ENCODE measurements at regions of chr16 and their contacts with region 1.

Region 1: DNA sequence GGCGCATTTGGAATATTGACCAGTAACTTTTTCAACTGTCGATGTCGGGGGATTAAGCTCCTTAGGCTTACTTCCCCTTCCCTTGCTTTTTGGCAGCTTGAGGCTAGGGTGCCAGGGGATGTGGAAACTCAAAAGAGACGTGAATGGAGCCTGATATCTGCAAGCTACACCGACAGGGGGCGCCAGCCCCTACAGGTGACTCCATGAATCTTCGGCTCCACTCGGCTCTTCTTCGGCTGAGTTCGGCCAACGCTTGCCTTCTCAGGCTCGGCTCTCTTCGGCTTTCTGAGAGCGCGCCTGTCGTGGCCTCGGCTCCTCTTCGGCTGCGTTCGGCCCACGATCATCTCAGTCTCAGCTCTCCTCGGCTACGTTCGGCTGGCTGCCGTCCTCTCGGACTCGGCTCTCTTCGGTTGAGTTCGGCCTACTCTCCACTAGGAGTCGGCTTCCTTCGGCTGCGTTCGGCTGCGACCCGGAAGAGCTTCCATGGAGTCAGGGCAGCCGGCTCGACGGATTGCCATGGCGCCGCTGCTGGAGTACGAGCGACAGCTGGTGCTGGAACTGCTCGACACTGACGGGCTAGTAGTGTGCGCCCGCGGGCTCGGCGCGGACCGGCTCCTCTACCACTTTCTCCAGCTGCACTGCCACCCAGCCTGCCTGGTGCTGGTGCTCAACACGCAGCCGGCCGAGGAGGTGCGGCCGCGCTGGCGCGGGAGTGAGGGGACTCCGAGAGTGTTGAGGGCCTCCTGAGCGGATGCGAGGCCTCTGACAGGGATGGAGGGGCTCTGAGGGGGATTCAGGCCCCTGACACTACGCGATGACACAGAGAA is at the start of gene ERCC4:
- DNase-seq: peak; percentile 94
- ATAC-seq: peak; percentile 97
- H3K4me3 Mint-ChIP-seq: peak within 1 kb of the TSS; percentile 92
- H3K27ac Mint-ChIP-seq: peak within 1 kb of the TSS; percentile 88
- H3K4me1 Mint-ChIP-seq: peaks cover 25% of the 10 kb centered on the region
- H3K27me3 Mint-ChIP-seq: no peaks in the 10 kb centered on the region
- CTCF ChIP-seq: peak; percentile 57
- total RNA-seq, gene ERCC4: 10.2 and 10.7 TPM in 2 replicates

Region 2: GRCh38 chr16:12803203-12804097 is 1116.4 kb before region 1 on chr16 and contains the start of gene CPPED1:
- CTCF ChIA-PET with region 1: no interaction called
- POLR2A ChIA-PET with region 1: no interaction called
- intact Hi-C with region 1: loop called (anchors 5 kb)
- DNase-seq: peak; percentile 94
- ATAC-seq: peak; percentile 89
- H3K4me3 Mint-ChIP-seq: peak within 1 kb of the TSS; percentile 93
- H3K27ac Mint-ChIP-seq: peak within 1 kb of the TSS; percentile 89
- H3K4me1 Mint-ChIP-seq: peaks cover 34% of the 10 kb centered on the region
- H3K27me3 Mint-ChIP-seq: no peaks in the 10 kb centered on the region
- CTCF ChIP-seq: no peak
- total RNA-seq, gene CPPED1: 12.2 and 14.1 TPM in 2 replicates

Region 3: GRCh38 chr16:13645591-13646245 is 274.2 kb before region 1 on chr16:
- CTCF ChIA-PET with region 1: no interaction called
- POLR2A ChIA-PET with region 1: no interaction called
- intact Hi-C with region 1: no loop called
- DNase-seq: no peak
- ATAC-seq: no peak
- H3K4me3 Mint-ChIP-seq: no peak overlapping the region
- H3K27ac Mint-ChIP-seq: no peak overlapping the region
- H3K4me1 Mint-ChIP-seq: no peaks in the 10 kb centered on the region
- H3K27me3 Mint-ChIP-seq: peaks cover 3% of the 10 kb centered on the region
- CTCF ChIP-seq: no peak

Region 4: DNA sequence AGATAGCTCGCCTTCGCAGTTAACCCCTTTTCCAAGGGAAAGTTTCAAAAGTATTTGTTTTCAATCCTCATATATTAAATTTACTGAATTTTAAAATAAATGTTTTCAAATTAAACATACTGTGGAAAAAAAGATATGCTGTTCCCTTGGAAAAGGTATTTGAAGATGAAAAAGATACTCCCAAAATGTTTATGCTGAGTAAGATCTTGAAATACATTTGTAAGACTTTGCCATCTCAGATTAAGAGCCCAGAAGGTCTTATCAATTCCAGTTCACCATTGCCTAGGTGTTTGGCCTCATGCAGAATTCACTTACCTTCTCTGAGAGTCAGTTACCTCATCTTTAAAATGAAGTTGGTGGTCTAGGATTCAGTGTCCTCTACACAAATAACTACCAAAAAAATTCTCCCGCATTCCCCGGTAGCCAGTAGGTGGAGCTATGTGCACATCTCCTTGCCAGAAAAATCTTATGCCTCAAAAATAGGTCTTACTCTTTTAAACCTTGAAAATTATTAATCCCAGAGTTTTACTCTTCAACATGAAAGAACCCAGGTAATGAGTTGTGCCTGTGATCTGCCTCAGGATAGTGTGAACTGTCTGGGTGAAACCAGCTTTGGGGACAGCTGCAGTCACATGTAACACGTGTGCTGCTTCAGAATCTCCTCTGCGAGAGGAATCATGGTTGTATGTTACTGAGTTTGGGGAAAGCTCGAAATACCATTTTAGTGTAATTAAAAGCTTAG is 329.6 kb after region 1 on chr16:
- CTCF ChIA-PET with region 1: interaction called, 16 read pairs
- POLR2A ChIA-PET with region 1: no interaction called
- intact Hi-C with region 1: loop called (anchors 1 kb)
- DNase-seq: no peak
- ATAC-seq: no peak
- H3K4me3 Mint-ChIP-seq: no peak overlapping the region
- H3K27ac Mint-ChIP-seq: no peak overlapping the region
- H3K4me1 Mint-ChIP-seq: no peaks in the 10 kb centered on the region
- H3K27me3 Mint-ChIP-seq: no peaks in the 10 kb centered on the region
- CTCF ChIP-seq: peak; percentile 76

Region 5: DNA sequence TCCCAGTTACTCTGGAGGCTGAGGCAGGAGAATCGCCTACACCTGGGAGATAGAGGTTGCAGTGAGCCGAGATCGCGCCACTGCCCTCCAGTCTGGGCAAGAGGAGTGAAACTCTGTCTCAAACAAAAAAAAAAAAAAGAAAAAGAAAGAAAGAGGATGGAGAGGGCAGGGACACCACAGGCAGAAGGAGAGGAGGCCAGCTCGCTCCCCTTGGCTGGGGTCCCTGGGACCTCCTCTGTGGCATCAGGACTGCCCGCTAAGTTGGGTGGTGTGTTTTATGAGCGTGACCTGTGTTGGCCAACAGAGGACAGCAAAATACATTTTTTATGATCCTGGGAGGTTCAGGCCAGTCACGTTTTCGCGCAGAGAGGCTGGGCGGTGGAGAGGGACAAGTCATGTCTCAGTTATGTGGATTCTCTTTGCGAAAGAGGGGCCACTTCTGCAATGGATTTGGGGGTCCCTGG is 380.8 kb after region 1 on chr16:
- CTCF ChIA-PET with region 1: interaction called, 3 read pairs
- POLR2A ChIA-PET with region 1: no interaction called
- intact Hi-C with region 1: loop called (anchors 5 kb)
- DNase-seq: no peak
- ATAC-seq: peak; percentile 60
- H3K4me3 Mint-ChIP-seq: peak overlapping the region; percentile 83
- H3K27ac Mint-ChIP-seq: peak overlapping the region; percentile 61
- H3K4me1 Mint-ChIP-seq: peaks cover 16% of the 10 kb centered on the region
- H3K27me3 Mint-ChIP-seq: peaks cover 14% of the 10 kb centered on the region
- CTCF ChIP-seq: no peak

Region 6: DNA sequence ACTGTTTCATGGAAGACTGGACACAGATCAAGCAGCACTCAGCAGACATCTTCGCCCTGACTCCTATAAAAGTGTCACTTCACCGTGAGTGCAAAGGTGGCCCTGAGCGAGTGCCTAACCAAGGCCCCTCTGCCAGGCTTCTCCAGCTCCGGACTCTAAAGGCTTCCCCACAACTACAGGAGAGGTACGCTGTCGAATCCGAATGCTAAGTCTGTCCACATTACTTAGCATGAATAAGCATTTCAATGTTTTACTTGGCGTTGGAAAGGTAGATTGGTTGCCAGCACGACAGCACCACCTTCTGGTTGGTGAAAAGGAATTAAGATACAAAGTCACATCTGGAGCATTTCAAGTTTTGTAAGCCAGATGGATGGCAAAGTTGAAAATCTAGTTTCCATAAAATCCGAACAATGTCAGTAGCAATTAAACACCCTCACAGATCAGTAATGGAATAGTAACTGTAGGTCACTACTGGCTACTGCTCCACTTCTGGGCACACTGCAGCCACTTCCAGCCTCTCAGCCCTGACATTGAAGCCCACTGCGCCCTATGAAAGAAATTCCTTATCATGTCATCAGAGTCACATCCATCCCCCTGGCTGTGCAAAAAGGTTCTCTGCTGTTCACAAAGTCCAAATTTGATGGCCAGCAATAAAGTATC is 609.2 kb after region 1 on chr16:
- CTCF ChIA-PET with region 1: interaction called, 4 read pairs
- POLR2A ChIA-PET with region 1: no interaction called
- intact Hi-C with region 1: loop called (anchors 1 kb)
- DNase-seq: peak; percentile 24
- ATAC-seq: peak; percentile 65
- H3K4me3 Mint-ChIP-seq: no peak overlapping the region
- H3K27ac Mint-ChIP-seq: no peak overlapping the region
- H3K4me1 Mint-ChIP-seq: peaks cover 5% of the 10 kb centered on the region
- H3K27me3 Mint-ChIP-seq: no peaks in the 10 kb centered on the region
- CTCF ChIP-seq: no peak

Region 7: DNA sequence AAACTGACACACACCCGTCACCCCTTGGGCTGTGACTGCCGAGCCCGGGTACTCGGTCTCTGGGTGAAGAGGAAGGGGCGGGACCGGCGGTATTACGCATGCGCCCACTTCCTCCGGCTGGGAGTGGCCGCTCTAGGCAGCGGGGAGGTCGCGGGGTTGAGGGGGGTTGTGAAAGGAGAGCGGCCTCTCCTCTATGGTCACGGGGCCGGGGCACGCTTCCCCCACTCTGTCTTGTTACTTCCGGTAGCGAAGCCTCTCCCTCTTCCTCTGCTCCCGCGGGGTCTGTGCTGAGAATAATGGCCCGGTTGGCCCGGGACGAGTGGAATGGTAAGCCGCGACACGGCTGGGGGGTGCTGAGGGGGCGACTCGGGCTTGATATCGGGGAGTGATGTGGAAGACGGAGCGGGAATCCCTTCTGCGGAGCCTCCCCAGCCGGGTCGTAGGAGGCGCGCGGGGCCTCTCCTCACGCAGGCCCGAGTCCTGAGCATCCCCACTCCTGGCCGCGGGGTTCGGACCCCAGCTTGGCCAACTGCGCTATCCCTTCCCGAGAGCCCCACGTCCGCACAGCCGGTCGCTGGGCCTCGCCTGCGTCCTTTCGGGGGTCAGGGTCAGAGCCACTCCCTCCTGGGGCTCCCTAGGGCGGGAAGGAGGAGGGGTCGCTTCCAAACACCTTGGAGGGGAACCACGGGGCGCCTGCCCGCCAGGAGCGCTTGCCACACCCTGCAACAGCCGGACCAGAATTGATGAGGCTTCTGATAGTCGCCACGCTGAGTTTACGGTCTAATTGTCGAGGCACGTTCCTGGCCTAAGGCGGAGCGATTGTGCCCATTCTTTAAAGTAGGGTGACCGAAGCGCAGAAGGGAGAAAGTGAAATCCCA is 713.0 kb after region 1 on chr16 and contains the start of gene BFAR:
- CTCF ChIA-PET with region 1: no interaction called
- POLR2A ChIA-PET with region 1: interaction called, 3 read pairs
- intact Hi-C with region 1: loop called (anchors 1 kb)
- DNase-seq: peak; percentile 99
- ATAC-seq: peak; percentile 77
- H3K4me3 Mint-ChIP-seq: peak within 1 kb of the TSS; percentile 100
- H3K27ac Mint-ChIP-seq: peak within 1 kb of the TSS; percentile 97
- H3K4me1 Mint-ChIP-seq: peaks cover 64% of the 10 kb centered on the region
- H3K27me3 Mint-ChIP-seq: no peaks in the 10 kb centered on the region
- CTCF ChIP-seq: no peak
- total RNA-seq, gene BFAR: 54.9 and 68.2 TPM in 2 replicates